ENCODE measurements at regions of chr1 and their contacts with region 1.

Region 1: GRCh38 chr1:57007948-57008347 is 42.1 kb upstream of the C8B start:
- DNase-seq: peak in 2 of 5 donors; percentile 12 to 22
- H3K4me3 ChIP-seq: no peak overlapping the region
- H3K27ac ChIP-seq: no peak overlapping the region
- H3K4me1 ChIP-seq: peaks cover 2% of the 10 kb centered on the region
- H3K27me3 ChIP-seq: no peaks in the 10 kb centered on the region
- CTCF ChIP-seq: no peak
- EP300 ChIP-seq: no peak
- POLR2A ChIP-seq: no peak

Region 2: DNA sequence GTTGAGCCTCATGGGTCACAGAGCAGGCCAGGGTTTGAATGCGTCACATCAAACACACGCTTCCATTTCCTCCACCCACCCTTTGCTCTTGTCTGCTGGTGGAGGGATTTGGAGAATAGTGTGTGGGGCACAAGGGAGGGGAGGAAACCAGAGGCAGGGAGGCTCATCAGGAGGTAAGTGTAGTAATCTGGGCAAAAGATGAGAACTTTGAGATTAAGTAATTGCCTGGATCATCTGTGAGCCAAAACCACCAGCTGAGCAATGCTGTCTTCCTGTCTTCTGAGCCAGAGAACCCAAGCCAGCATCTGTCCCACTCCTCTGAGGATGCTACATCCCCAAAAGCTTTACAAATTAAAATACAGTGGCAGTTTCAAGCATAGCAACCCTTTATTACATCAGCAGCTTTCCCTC is 87.4 kb before region 1 on chr1:
- intact Hi-C with region 1: no loop called
- DNase-seq: no peak
- H3K4me3 ChIP-seq: no peak overlapping the region
- H3K27ac ChIP-seq: no peak overlapping the region
- H3K4me1 ChIP-seq: no peaks in the 10 kb centered on the region
- H3K27me3 ChIP-seq: no peaks in the 10 kb centered on the region
- CTCF ChIP-seq: no peak
- EP300 ChIP-seq: no peak
- POLR2A ChIP-seq: no peak

Region 3: DNA sequence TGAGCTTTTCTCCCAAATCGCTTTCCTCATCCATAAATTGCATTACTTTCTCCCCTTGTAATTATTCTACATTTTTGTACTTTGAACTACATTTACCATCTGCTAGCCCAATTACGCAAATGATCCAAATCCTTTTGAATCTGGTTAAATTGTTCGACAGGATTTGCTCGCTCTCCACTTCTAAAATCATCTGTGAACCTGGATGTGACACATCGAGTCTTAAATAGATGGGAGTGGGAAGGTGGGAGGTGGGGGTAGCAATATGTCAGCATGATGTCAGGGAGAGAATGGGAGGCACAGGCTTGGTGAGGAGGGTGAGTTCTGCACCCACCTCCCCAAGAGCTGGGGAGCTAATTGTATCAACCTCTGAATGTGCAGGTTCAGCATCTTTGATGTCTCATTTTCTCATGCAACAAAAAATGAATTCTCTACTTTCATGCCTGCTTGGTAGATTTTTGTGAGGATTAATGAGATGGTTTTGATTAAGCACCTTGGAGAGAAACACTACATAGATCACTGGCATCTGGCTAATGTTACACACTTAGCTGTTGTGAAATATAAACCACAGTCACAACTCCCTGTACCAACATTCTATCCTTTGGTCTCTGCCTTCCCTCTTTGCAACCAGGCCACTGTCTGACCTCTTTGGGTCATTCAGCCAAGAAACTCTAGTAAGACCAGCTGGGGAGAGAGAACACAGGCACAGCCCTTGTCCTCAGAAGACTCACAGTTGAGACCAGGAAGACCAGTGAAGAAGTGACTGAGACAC is 250.8 kb after region 1 on chr1:
- intact Hi-C with region 1: loop called in 1 of 4 experiments (anchors 5 kb)
- DNase-seq: no peak
- H3K4me3 ChIP-seq: no peak overlapping the region
- H3K27ac ChIP-seq: no peak overlapping the region
- H3K4me1 ChIP-seq: no peaks in the 10 kb centered on the region
- H3K27me3 ChIP-seq: no peaks in the 10 kb centered on the region
- CTCF ChIP-seq: no peak
- EP300 ChIP-seq: no peak
- POLR2A ChIP-seq: no peak

Measured in ovary (tissue), 10 donors.